A549 (cell line): ENCODE measurements at regions of chr11 and their contacts with region 1.

Region 1: DNA sequence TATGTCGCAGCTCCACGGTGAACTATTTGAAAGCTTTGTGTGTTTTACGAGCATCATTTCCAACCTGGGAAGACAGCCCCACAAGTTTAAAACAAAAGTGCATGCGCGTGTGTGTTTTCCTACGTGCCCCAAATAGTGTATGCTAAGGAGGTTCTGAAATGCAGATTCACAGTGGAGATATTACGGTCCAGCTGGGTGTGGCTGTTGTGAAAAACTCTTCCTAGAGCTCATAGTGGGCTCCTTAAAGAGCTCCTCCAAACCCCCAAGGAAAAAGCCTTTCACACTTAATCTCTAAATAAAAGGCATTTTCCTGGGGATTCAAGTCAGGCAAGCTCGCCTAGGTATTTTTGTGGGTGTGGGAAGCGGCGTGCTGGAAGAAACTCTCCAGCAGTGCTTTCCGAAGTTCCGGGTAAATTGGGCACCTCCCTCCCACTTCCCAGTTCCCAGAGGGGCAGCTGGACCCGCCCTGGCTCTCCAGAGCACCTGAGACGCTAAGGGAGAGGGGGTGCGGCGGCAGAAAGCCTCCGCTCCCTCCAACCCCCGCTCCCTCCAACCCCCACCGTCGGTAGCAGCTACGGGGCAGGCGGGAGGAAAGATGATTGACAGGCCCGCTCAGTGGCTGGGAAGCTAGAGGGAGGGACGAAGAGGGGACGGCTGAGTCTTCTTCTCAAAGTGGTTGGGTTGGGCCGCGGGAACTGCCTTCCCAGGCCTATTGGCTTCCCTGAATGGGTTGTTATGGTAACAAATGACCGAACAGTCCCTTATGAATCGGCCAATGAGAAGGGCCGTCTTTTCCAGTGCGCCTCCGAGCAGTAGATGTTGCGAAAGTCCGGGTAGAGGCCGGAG is 558 bp upstream of the PCF11 start:
- DNase-seq: peak; percentile 98 to 100
- ATAC-seq: peak; percentile 93 to 94
- H3K4me3 ChIP-seq: peak overlapping the region; percentile 64
- H3K27ac ChIP-seq: peak overlapping the region; percentile 93 to 96
- H3K4me1 ChIP-seq: peaks cover 29% of the 10 kb centered on the region
- CTCF ChIP-seq: no peak
- EP300 ChIP-seq: no peak
- POLR2A ChIP-seq: peak; percentile 56; the same call in 1 of the 2 replicates
- RAD21 ChIP-seq: no peak

Region 2: DNA sequence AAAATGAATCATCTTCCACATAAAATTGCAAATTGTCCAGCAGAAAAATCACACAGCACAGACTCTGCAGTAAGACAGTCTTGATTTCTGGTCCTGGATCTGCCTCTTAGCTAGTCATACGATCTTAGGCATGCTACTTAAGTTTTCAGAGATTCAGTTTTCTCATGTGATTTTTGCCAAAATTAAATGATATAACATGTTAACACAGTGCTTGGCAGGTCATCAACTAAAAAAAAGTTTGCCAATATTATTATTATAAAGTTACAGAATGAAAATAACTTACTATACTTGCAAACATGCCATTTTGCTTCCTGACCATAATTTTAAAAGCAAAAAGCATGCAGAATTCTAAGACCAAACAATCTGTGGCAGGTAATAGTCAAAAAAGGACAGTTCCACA is 99.8 kb before region 1 on chr11:
- CTCF ChIA-PET with region 1: no interaction called
- POLR2A ChIA-PET with region 1: interaction called, 12 read pairs
- DNase-seq: no peak
- ATAC-seq: no peak
- H3K4me3 ChIP-seq: no peak overlapping the region
- H3K27ac ChIP-seq: no peak overlapping the region
- H3K4me1 ChIP-seq: peaks cover 15% of the 10 kb centered on the region
- CTCF ChIP-seq: no peak
- EP300 ChIP-seq: no peak
- POLR2A ChIP-seq: no peak
- RAD21 ChIP-seq: no peak

Region 3: DNA sequence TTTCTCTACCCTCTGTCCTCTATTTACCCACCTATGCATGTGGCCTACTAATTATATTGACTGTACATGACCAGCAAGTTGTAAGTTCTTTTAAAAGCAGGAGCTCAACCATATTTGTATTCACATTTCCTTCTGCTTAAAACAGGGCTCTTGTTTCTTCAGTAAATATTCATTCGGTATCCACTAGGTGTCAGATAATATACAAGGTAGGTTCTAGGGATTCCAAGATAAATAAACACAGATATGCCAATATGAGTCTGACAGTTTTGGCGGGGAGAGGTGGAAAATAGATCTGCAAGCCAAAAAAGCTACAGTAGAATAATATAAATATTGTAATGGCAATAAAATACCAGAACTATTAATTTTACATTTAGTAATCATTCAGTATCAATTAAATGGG is 69.3 kb before region 1 on chr11:
- CTCF ChIA-PET with region 1: interaction called, 11 read pairs
- POLR2A ChIA-PET with region 1: interaction called, 44 read pairs
- DNase-seq: peak in 1 of 2 experiments; percentile 43
- ATAC-seq: peak; percentile 76
- H3K4me3 ChIP-seq: no peak overlapping the region
- H3K27ac ChIP-seq: no peak overlapping the region
- H3K4me1 ChIP-seq: peaks cover 9% of the 10 kb centered on the region
- CTCF ChIP-seq: peak; percentile 51
- EP300 ChIP-seq: no peak
- POLR2A ChIP-seq: no peak
- RAD21 ChIP-seq: peak; percentile 60 to 61

Region 4: DNA sequence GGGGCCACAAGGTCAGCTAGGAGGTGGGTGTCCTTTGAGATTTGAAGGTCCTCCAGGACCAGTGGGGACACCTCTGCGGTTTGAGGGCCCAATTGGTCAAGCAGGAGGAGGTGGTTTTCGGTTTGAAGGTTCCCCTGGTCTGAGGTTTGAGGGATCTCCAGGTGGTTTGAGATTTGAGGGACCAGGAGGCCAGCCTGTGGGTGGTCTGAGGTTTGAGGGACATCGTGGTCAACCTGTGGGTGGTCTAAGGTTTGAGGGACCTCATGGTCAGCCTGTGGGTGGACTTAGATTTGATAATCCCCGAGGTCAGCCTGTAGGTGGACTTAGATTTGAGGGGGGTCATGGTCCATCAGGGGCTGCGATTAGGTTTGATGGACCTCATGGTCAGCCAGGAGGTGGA is 12.4 kb after region 1 on chr11:
- CTCF ChIA-PET with region 1: interaction called, 3 read pairs
- POLR2A ChIA-PET with region 1: interaction called, 10 read pairs
- DNase-seq: no peak
- ATAC-seq: no peak
- H3K4me3 ChIP-seq: no peak overlapping the region
- H3K27ac ChIP-seq: no peak overlapping the region
- H3K4me1 ChIP-seq: peaks cover 28% of the 10 kb centered on the region
- CTCF ChIP-seq: no peak
- EP300 ChIP-seq: no peak
- POLR2A ChIP-seq: no peak
- RAD21 ChIP-seq: no peak

Region 5: DNA sequence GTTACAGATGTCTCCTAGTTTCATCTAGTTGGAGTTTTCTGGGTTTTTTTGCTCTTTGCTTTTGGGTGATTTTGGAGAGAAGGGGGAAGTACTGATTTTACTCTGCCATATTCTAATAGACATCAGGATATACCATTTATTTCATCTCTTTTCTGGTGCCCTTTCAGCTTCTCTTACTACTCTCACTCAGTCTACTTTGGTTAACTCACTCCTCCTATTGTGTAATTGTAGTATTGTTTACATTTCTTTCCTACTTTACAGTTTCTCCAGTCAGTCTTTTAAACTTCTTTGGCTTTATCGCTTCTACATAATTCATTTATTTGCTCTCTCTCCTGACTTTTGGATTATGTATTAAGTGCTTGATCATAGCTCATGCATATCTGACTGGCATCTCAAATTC is 43.7 kb after region 1 on chr11:
- CTCF ChIA-PET with region 1: no interaction called
- POLR2A ChIA-PET with region 1: no interaction called
- DNase-seq: no peak
- ATAC-seq: no peak
- H3K4me3 ChIP-seq: no peak overlapping the region
- H3K27ac ChIP-seq: no peak overlapping the region
- H3K4me1 ChIP-seq: peaks cover 7% of the 10 kb centered on the region
- CTCF ChIP-seq: no peak
- EP300 ChIP-seq: no peak
- POLR2A ChIP-seq: no peak
- RAD21 ChIP-seq: no peak